ENCODE measurements at regions of chr4 and their contacts with region 1.

Region 1: DNA sequence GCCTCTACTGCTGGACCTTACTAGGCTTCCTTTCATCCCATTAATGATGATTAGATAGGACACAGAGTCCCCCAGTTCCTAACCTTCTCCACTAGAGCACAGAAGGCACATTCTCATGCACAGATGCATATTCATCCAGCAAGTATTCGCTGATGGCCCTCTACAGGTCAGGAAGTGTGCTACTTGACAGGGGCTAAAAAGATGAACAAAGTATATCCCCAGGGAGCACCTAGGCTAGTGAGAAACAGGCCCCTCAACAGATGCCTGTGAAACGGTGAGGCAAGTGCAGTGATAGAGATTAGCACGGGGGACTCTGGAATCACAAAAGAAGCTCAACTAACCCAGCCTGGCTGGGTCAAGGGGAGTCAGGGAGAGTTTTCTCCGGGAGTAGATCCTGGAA is 95.8 kb downstream of the MGST2 start:
- DNase-seq: no peak
- H3K4me3 ChIP-seq: no peak overlapping the region
- H3K27ac ChIP-seq: no peak overlapping the region
- H3K4me1 ChIP-seq: peaks cover 41% of the 10 kb centered on the region
- H3K27me3 ChIP-seq: no peaks in the 10 kb centered on the region
- CTCF ChIP-seq: peak; percentile 19 to 25
- POLR2A ChIP-seq: no peak

Region 2: DNA sequence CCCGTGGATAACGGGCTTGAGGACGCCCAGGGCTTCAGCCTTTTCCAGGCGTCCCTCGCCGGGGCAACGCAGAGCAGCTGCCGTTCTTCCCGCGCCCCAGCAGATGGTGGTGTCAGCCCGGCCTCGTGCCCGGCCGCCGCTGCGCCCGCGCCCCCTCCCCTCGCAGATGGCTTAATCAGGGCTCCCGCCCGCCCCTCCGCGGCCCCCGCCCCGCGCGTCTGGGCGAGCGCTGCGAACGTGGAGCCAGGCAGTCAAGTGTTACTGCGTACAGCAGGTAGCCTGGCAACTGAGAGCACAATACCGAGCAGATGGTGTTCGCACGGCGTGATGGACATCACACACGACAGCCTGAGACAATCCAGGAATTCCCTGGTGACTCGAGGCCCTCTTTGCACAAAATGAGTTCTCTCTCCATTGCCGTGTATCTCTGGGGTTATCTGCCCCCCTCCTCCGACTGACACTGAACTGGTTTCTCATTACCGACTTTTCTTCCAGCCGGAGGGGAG is 26.5 kb before region 1 on chr4:
- CTCF ChIA-PET with region 1: interaction called, 9 read pairs
- POLR2A ChIA-PET with region 1: no interaction called
- dilution Hi-C with region 1: no loop called
- intact Hi-C with region 1: loop called (anchors 1 kb)
- DNase-seq: peak; percentile 94
- H3K4me3 ChIP-seq: peak overlapping the region in 2 of 3 experiments; percentile 18 to 34
- H3K27ac ChIP-seq: peak overlapping the region; percentile 14
- H3K4me1 ChIP-seq: peaks cover 12% of the 10 kb centered on the region
- H3K27me3 ChIP-seq: no peaks in the 10 kb centered on the region
- CTCF ChIP-seq: peak; percentile 66 to 88
- POLR2A ChIP-seq: no peak

Region 3: GRCh38 chr4:139791681-139792080 is 30.2 kb after region 1 on chr4:
- CTCF ChIA-PET with region 1: interaction called, 14 read pairs
- POLR2A ChIA-PET with region 1: interaction called, 5 read pairs
- dilution Hi-C with region 1: no loop called
- intact Hi-C with region 1: loop called (anchors 1 kb)
- DNase-seq: peak; percentile 78
- H3K4me3 ChIP-seq: no peak overlapping the region
- H3K27ac ChIP-seq: peak overlapping the region; percentile 52
- H3K4me1 ChIP-seq: peaks cover 25% of the 10 kb centered on the region
- H3K27me3 ChIP-seq: no peaks in the 10 kb centered on the region
- CTCF ChIP-seq: no peak
- POLR2A ChIP-seq: no peak

Region 4: GRCh38 chr4:139815778-139816601 is 54.5 kb after region 1 on chr4:
- CTCF ChIA-PET with region 1: interaction called, 6 read pairs
- POLR2A ChIA-PET with region 1: no interaction called
- dilution Hi-C with region 1: no loop called
- intact Hi-C with region 1: loop called (anchors 1 kb)
- DNase-seq: peak; percentile 94
- H3K4me3 ChIP-seq: peak overlapping the region in 2 of 3 experiments; percentile 31 to 53
- H3K27ac ChIP-seq: peak overlapping the region; percentile 61
- H3K4me1 ChIP-seq: peaks cover 22% of the 10 kb centered on the region
- H3K27me3 ChIP-seq: no peaks in the 10 kb centered on the region
- CTCF ChIP-seq: no peak
- POLR2A ChIP-seq: no peak

Region 5: GRCh38 chr4:139919521-139919920 is 158.1 kb after region 1 on chr4:
- CTCF ChIA-PET with region 1: no interaction called
- POLR2A ChIA-PET with region 1: no interaction called
- dilution Hi-C with region 1: no loop called
- intact Hi-C with region 1: loop called (anchors 1 kb)
- DNase-seq: peak; percentile 95
- H3K4me3 ChIP-seq: no peak overlapping the region
- H3K27ac ChIP-seq: peak overlapping the region; percentile 84
- H3K4me1 ChIP-seq: peaks cover 47% of the 10 kb centered on the region
- H3K27me3 ChIP-seq: no peaks in the 10 kb centered on the region
- CTCF ChIP-seq: no peak
- POLR2A ChIP-seq: peak; percentile 21